Transverse colon (tissue), 4 donors: ENCODE measurements at regions of chr7 and their contacts with region 1.

Region 1: DNA sequence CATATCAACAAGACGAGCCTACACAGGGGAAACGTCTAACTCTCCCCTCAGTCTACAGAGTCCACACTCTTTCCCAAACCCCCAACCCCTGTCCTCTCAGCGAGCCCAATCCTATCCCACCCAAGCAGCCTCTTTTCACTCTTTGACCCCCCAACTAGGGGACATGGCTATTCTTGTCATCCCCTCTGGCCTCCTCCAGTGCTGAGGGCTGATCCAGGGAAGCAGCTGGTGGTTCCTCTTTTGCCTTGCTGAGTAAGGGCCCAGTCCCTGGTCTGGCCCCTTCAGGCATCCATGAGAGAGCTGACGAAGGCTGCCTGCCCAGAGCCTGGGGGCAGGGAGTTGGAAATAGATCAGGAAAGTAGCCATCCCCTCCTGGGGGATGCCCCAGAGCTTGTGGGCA is 6.4 kb downstream of the NOBOX start:
- DNase-seq: no peak
- H3K4me3 ChIP-seq: no peak overlapping the region
- H3K27ac ChIP-seq: no peak overlapping the region
- H3K4me1 ChIP-seq: peaks cover 0 to 2% (median 0%) of the 10 kb centered on the region in 4 donors
- H3K27me3 ChIP-seq: no peaks in the 10 kb centered on the region
- CTCF ChIP-seq: no peak
- EP300 ChIP-seq: no peak
- POLR2A ChIP-seq: no peak

Region 2: GRCh38 chr7:144174613-144175012 is 222.5 kb before region 1 on chr7:
- in situ Hi-C with region 1: loop called in 3 of 4 experiments (anchors 5 to 25 kb)
- intact Hi-C with region 1: no loop called
- DNase-seq: no peak
- H3K4me3 ChIP-seq: no peak overlapping the region
- H3K27ac ChIP-seq: no peak overlapping the region
- H3K4me1 ChIP-seq: no peaks in the 10 kb centered on the region
- H3K27me3 ChIP-seq: no peaks in the 10 kb centered on the region
- CTCF ChIP-seq: no peak
- EP300 ChIP-seq: no peak
- POLR2A ChIP-seq: no peak

Region 3: GRCh38 chr7:144384071-144384470 is 13.0 kb before region 1 on chr7:
- in situ Hi-C with region 1: no loop called
- intact Hi-C with region 1: no loop called
- DNase-seq: peak; percentile 56
- H3K4me3 ChIP-seq: no peak overlapping the region
- H3K27ac ChIP-seq: peak overlapping the region; percentile 42 to 70 (median 60)
- H3K4me1 ChIP-seq: peaks cover 0 to 17% (median 9%) of the 10 kb centered on the region in 4 donors
- H3K27me3 ChIP-seq: no peaks in the 10 kb centered on the region
- CTCF ChIP-seq: no peak
- EP300 ChIP-seq: no peak
- POLR2A ChIP-seq: no peak

Region 4: GRCh38 chr7:144529269-144529926 is 132.3 kb after region 1 on chr7:
- in situ Hi-C with region 1: no loop called
- intact Hi-C with region 1: no loop called
- DNase-seq: no peak
- H3K4me3 ChIP-seq: no peak overlapping the region
- H3K27ac ChIP-seq: no peak overlapping the region
- H3K4me1 ChIP-seq: no peaks in the 10 kb centered on the region
- H3K27me3 ChIP-seq: no peaks in the 10 kb centered on the region
- CTCF ChIP-seq: no peak
- EP300 ChIP-seq: no peak
- POLR2A ChIP-seq: no peak

Region 5: DNA sequence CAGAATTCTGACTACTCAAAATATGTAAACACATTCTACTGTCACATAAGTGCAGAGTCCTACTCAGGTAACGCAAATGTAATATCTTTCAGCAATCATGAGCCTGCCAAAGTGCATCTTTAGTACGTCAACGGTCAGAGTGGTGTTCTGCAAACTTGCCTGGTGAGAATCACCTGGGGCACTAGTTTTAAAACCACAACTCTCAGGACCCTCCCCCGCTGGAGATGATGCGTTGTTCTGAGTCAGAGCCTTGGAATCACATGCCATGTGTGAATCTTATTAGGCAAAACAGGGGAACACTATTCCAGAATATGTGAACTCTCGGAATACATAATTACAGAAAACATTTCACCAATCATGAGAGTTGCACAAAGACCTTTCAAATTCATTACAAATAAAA is 323.1 kb after region 1 on chr7:
- in situ Hi-C with region 1: no loop called
- intact Hi-C with region 1: no loop called
- DNase-seq: no peak
- H3K4me3 ChIP-seq: no peak overlapping the region
- H3K27ac ChIP-seq: no peak overlapping the region
- H3K4me1 ChIP-seq: peaks cover 0 to 7% (median 0%) of the 10 kb centered on the region in 4 donors
- H3K27me3 ChIP-seq: no peaks in the 10 kb centered on the region
- CTCF ChIP-seq: no peak
- EP300 ChIP-seq: no peak
- POLR2A ChIP-seq: no peak